ENCODE measurements at regions of chr12 and their contacts with region 1.

Region 1: GRCh38 chr12:124422570-124423523 is 128.0 kb downstream of the RFLNA start:
- DNase-seq: peak; percentile 84 to 96
- H3K4me3 ChIP-seq: peak overlapping the region; percentile 49; the same call in 1 of the 2 replicates
- H3K27ac ChIP-seq: peak overlapping the region; percentile 91
- H3K4me1 ChIP-seq: peaks cover 32% of the 10 kb centered on the region
- H3K27me3 ChIP-seq: no peaks in the 10 kb centered on the region
- CTCF ChIP-seq: no peak

Region 2: GRCh38 chr12:124359671-124360581 is 62.9 kb before region 1 on chr12:
- CTCF ChIA-PET with region 1: interaction called, 3 read pairs
- POLR2A ChIA-PET with region 1: no interaction called
- intact Hi-C with region 1: loop called (anchors 2 kb)
- DNase-seq: peak in 1 of 2 experiments; percentile 87
- H3K4me3 ChIP-seq: no peak overlapping the region
- H3K27ac ChIP-seq: no peak overlapping the region
- H3K4me1 ChIP-seq: no peaks in the 10 kb centered on the region
- H3K27me3 ChIP-seq: no peaks in the 10 kb centered on the region
- CTCF ChIP-seq: no peak

Region 3: GRCh38 chr12:125132698-125133400 is 710.0 kb after region 1 on chr12:
- CTCF ChIA-PET with region 1: no interaction called
- POLR2A ChIA-PET with region 1: no interaction called
- intact Hi-C with region 1: no loop called
- DNase-seq: no peak
- H3K4me3 ChIP-seq: no peak overlapping the region
- H3K27ac ChIP-seq: no peak overlapping the region
- H3K4me1 ChIP-seq: peaks cover 4% of the 10 kb centered on the region; the same call in 1 of the 2 replicates
- H3K27me3 ChIP-seq: no peaks in the 10 kb centered on the region
- CTCF ChIP-seq: no peak